Spleen (tissue), 13 donors: ENCODE measurements at regions of chr19 and their contacts with region 1.

Region 1: GRCh38 chr19:29665215-29665825 is at the start of gene PLEKHF1:
- DNase-seq: peak; percentile 97
- H3K4me3 ChIP-seq: peak within 1 kb of the TSS; percentile 76 to 98 (median 84)
- H3K27ac ChIP-seq: peak within 1 kb of the TSS; percentile 52 to 93 (median 84)
- H3K4me1 ChIP-seq: peaks cover 38 to 83% (median 69%) of the 10 kb centered on the region in 6 donors
- H3K27me3 ChIP-seq: no peaks in the 10 kb centered on the region
- CTCF ChIP-seq: no peak
- POLR2A ChIP-seq: no peak
- total RNA-seq, gene PLEKHF1: 12.4 to 28.0 (median 18.5) TPM

Region 2: DNA sequence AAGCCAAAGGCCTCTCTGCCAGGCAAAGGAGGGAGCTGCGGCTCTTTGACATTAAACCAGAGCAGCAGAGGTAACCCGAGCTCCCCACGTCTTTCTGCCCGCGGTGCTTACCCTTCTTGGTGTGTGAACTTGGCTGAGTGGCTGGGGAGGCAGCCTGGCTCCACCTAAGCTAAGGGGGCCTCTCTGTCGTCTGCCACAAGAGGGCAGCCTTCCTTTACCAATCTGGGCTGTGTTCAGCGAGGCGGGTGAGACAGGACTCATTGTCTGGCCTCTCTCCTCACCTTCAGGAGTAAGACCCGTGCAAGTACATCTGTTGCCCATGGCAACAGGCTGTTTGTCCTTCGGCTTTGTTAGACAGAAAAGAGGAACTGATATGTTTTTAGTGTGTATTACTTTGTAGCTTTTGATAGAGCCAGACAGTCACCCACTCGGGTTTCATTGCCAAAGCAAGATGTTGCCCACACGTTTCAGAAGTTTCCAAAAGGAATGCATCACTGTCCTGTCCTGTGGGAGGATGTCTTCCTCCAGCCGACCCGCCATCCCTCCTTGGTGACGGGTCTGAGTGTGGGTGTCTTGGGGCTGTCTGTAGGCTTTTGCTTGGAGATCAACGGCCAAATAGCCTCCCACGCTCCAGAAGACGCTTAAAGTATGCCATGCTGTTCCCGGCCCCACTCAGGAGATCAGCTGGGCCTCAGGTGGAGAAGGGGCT is 54.6 kb before region 1 on chr19:
- intact Hi-C with region 1: loop called (anchors 10 kb)
- DNase-seq: peak; percentile 94
- H3K4me3 ChIP-seq: peak overlapping the region in 1 of 8 donors; percentile 15
- H3K27ac ChIP-seq: peak overlapping the region in 5 of 8 donors; percentile 6 to 75 (median 52)
- H3K4me1 ChIP-seq: peaks cover 5 to 44% (median 27%) of the 10 kb centered on the region in 6 donors
- H3K27me3 ChIP-seq: no peaks in the 10 kb centered on the region
- CTCF ChIP-seq: peak; percentile 80 to 96 (median 89)
- POLR2A ChIP-seq: no peak

Region 3: DNA sequence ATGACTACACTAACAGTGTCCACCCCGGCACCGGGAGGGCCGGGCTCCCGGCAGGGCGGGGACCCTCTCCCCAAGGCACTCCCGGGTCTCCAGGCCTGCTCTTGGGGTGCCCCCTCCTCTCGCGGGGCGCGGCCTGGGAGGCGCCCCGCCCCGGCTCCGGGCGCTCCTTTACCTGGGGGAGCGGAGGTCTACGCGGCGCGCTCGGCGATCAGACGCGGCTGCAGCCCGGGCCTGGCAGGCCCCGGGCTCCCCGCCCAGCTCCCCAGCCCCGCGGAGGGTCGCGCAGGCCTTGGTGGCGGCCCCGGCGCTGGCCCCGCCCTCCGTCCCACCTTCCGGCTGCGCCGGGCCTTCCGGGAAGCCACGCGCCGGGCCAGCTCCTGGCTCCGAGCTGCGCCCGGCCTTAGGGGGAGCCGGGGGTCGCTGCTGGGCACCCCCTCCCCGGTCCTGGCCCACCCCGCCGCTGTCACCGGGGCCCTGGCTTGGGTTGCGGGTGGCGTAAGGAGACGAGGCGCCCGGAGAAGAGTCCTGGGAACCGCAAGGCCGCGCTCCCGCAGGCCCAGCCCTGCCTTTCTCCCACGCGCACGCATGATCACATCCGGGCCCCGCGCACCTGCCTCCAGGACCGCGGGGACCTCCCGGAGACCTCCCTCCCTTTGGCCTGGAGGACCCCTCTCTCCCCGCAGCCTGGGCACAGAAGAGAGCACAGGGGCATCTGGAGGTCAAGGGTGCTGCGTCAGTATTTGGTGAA is 49.8 kb after region 1 on chr19 and contains the start of gene C19orf12:
- intact Hi-C with region 1: loop called (anchors 10 kb)
- DNase-seq: peak; percentile 92
- H3K4me3 ChIP-seq: peak within 1 kb of the TSS; percentile 47 to 97 (median 87)
- H3K27ac ChIP-seq: peak within 1 kb of the TSS; percentile 87 to 97 (median 95)
- H3K4me1 ChIP-seq: peaks cover 25 to 69% (median 55%) of the 10 kb centered on the region in 6 donors
- H3K27me3 ChIP-seq: no peaks in the 10 kb centered on the region
- CTCF ChIP-seq: peak in 1 of 11 experiments; percentile 12
- POLR2A ChIP-seq: peak; percentile 10 to 70 (median 61)
- total RNA-seq, gene C19orf12: 24.2 to 36.9 (median 30.2) TPM